HepG2 (cell line): ENCODE measurements at regions of chr15 and their contacts with region 1.

Region 1: GRCh38 chr15:93060336-93061263 is 28.4 kb downstream of the RGMA start:
- DNase-seq: no peak
- ATAC-seq: no peak
- H3K4me3 ChIP-seq: no peak overlapping the region
- H3K27ac ChIP-seq: no peak overlapping the region
- H3K4me1 ChIP-seq: no peaks in the 10 kb centered on the region
- H3K27me3 ChIP-seq: peaks cover 19 to 77% of the 10 kb centered on the region in 2 experiments
- CTCF ChIP-seq: no peak
- EP300 ChIP-seq: no peak
- POLR2A ChIP-seq: no peak
- RAD21 ChIP-seq: no peak

Region 2: GRCh38 chr15:93076875-93077274 is 16.3 kb after region 1 on chr15:
- CTCF ChIA-PET with region 1: no interaction called
- POLR2A ChIA-PET with region 1: no interaction called
- in situ Hi-C with region 1: no loop called
- intact Hi-C with region 1: loop called (anchors 1 kb)
- DNase-seq: no peak
- ATAC-seq: no peak
- H3K4me3 ChIP-seq: no peak overlapping the region
- H3K27ac ChIP-seq: no peak overlapping the region
- H3K4me1 ChIP-seq: no peaks in the 10 kb centered on the region
- H3K27me3 ChIP-seq: peaks cover 9 to 87% of the 10 kb centered on the region in 2 experiments
- CTCF ChIP-seq: no peak
- EP300 ChIP-seq: no peak
- POLR2A ChIP-seq: no peak
- RAD21 ChIP-seq: no peak